HepG2 (cell line): ENCODE measurements at regions of chr16 and their contacts with region 1.

Region 1: GRCh38 chr16:53099318-53100130 is 44.7 kb downstream of the CHD9 start:
- DNase-seq: peak; percentile 88
- ATAC-seq: peak; percentile 94
- H3K4me3 ChIP-seq: peak overlapping the region; percentile 57 to 74 (median 67)
- H3K27ac ChIP-seq: peak overlapping the region; percentile 78
- H3K4me1 ChIP-seq: peaks cover 41% of the 10 kb centered on the region
- H3K27me3 ChIP-seq: no peaks in the 10 kb centered on the region; a peak in 1 of 5 replicates
- CTCF ChIP-seq: no peak
- EP300 ChIP-seq: peak in 1 of 2 experiments; percentile 31; a peak in 1 of 4 replicates
- POLR2A ChIP-seq: peak; percentile 61 to 83
- RAD21 ChIP-seq: 0 out of 2 replicates have a peak, but pooled peaks have one; percentile 50

Region 2: DNA sequence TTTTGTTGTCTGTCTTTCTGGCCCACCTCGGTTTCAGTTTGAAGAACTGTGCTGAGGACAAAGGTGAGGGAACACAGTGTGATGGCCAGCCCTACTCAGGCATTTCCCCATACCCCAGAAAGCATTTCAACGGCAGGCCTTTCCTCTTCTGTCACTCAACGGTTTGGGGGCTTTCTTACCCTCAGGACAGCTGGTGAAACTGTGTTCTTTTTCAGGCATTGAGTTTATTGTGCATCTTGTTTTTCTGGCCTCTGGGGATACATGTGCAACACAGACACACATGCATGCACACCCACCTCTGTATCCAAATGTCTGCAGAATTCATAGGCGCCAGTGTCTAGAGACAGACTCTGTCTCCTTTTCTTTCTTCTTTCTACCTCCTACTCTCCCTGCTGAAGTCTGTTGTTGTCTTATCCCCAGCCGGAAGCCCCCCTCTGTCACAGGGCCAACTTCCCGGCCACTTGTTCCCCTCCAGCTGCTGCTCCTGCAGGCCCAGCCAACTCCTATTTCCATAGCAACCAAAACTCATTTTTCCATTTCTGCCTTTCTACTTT is 27.7 kb before region 1 on chr16:
- CTCF ChIA-PET with region 1: no interaction called
- POLR2A ChIA-PET with region 1: no interaction called
- in situ Hi-C with region 1: no loop called
- intact Hi-C with region 1: no loop called
- DNase-seq: no peak
- ATAC-seq: no peak
- H3K4me3 ChIP-seq: no peak overlapping the region
- H3K27ac ChIP-seq: no peak overlapping the region
- H3K4me1 ChIP-seq: no peaks in the 10 kb centered on the region
- H3K27me3 ChIP-seq: no peaks in the 10 kb centered on the region
- CTCF ChIP-seq: no peak
- EP300 ChIP-seq: no peak
- POLR2A ChIP-seq: no peak
- RAD21 ChIP-seq: no peak

Region 3: GRCh38 chr16:53111078-53111791 is 11.7 kb after region 1 on chr16:
- CTCF ChIA-PET with region 1: no interaction called
- POLR2A ChIA-PET with region 1: interaction called, 10 read pairs
- in situ Hi-C with region 1: no loop called
- intact Hi-C with region 1: no loop called
- DNase-seq: no peak
- ATAC-seq: no peak
- H3K4me3 ChIP-seq: no peak overlapping the region
- H3K27ac ChIP-seq: no peak overlapping the region
- H3K4me1 ChIP-seq: no peaks in the 10 kb centered on the region
- H3K27me3 ChIP-seq: no peaks in the 10 kb centered on the region
- CTCF ChIP-seq: no peak
- EP300 ChIP-seq: no peak
- POLR2A ChIP-seq: no peak
- RAD21 ChIP-seq: no peak

Region 4: DNA sequence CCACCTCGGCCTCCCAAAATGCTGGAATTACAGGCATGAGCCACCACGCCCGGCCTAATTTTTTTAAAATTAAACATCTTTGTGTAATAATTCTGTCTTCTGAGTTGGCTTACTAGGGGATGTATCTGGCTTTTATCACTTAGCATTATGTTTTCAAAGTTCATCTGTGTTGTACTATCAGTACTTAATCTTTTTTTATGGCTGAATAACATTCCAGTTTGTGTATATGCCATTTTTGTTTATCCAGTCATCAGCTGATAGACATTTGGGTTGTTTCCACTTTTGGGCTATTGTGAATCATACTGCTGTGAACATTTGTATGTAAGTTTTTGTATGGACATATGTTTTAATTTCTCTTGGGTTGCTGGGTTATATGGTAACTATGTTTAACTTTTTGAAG is 24.2 kb after region 1 on chr16:
- CTCF ChIA-PET with region 1: no interaction called
- POLR2A ChIA-PET with region 1: no interaction called
- in situ Hi-C with region 1: no loop called
- intact Hi-C with region 1: loop called (anchors 1 kb)
- DNase-seq: no peak
- ATAC-seq: no peak
- H3K4me3 ChIP-seq: no peak overlapping the region
- H3K27ac ChIP-seq: no peak overlapping the region
- H3K4me1 ChIP-seq: peaks cover 5% of the 10 kb centered on the region
- H3K27me3 ChIP-seq: no peaks in the 10 kb centered on the region
- CTCF ChIP-seq: no peak
- EP300 ChIP-seq: no peak
- POLR2A ChIP-seq: no peak
- RAD21 ChIP-seq: no peak